Activated B cell treated with CpG ODN at 0.5 μM for 24 hours (primary cell): ENCODE measurements at regions of chr20 and their contacts with region 1.

Region 1: GRCh38 chr20:49338061-49338460 is 60.2 kb upstream of the ZNFX1 start:
- DNase-seq: no peak
- ATAC-seq: no peak
- H3K4me3 Mint-ChIP-seq: no peak overlapping the region
- H3K27ac Mint-ChIP-seq: no peak overlapping the region
- H3K4me1 Mint-ChIP-seq: no peaks in the 10 kb centered on the region
- H3K27me3 Mint-ChIP-seq: peaks cover 16% of the 10 kb centered on the region
- CTCF ChIP-seq: no peak

Region 2: DNA sequence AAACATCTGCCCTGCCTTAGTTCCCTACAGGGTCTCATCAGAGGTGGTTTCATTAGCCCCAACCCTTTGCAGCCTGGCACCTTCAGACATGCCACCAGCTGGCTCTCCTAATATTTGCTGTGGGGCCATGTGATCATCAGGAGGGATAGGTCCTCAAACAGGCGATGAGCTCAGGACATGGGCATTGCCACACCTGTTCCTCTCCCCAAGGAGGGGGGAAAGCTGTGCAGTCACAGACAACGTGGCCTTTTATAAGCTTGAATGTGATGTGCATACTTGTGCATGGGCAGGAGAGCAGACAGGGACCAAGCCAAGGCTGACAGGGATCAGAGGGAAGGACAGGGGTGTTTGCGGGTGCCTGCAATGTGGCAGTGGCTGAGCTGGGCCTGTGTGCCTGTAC is 18.6 kb after region 1 on chr20:
- CTCF ChIA-PET with region 1: no interaction called
- POLR2A ChIA-PET with region 1: no interaction called
- intact Hi-C with region 1: no loop called
- DNase-seq: no peak
- ATAC-seq: no peak
- H3K4me3 Mint-ChIP-seq: no peak overlapping the region
- H3K27ac Mint-ChIP-seq: no peak overlapping the region
- H3K4me1 Mint-ChIP-seq: no peaks in the 10 kb centered on the region
- H3K27me3 Mint-ChIP-seq: peaks cover 8% of the 10 kb centered on the region
- CTCF ChIP-seq: no peak

Region 3: DNA sequence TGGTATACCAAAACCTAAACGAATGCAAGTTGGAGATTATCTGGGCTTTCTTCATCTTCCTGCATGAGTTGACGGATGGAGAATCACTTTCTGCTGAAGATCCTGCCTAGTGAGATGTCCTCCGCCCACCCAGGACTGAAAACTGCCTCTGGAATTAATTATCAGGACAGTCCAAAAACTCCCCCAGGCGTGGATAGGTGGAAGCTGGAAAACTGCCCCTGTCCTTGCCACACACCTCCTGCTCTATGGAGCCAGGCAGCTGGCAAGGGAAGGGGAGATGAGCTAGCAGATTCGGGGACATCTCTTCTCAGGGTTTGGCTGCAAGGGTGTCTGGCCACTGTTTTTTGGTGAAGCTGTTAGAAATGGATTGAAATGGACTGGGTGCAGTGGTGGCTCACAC is 29.1 kb after region 1 on chr20:
- CTCF ChIA-PET with region 1: no interaction called
- POLR2A ChIA-PET with region 1: no interaction called
- intact Hi-C with region 1: no loop called
- DNase-seq: no peak
- ATAC-seq: no peak
- H3K4me3 Mint-ChIP-seq: no peak overlapping the region
- H3K27ac Mint-ChIP-seq: no peak overlapping the region
- H3K4me1 Mint-ChIP-seq: no peaks in the 10 kb centered on the region
- H3K27me3 Mint-ChIP-seq: peaks cover 31% of the 10 kb centered on the region
- CTCF ChIP-seq: no peak

Region 4: DNA sequence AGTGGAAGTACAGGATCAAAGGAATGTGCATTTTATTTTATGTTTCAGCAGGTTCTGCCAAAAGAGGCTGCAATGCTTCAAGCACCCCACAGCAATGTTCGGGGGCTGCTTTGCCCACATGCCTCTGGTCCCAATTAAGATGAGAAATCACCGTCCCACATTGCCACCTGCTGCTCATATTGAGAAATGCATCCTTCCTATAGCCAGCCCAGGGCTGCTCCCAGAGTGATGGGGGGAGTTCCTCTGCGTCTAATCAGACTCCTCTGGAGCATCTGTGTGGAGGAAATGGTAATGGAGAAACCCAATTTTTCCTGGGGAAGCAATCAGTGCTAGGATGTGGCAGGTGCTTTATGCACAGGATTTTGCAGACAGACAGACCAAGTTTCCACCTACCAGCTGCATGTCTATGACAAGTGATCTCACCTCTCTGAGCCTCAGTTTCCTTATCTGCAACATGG is 196.2 kb after region 1 on chr20:
- CTCF ChIA-PET with region 1: interaction called, 3 read pairs
- POLR2A ChIA-PET with region 1: no interaction called
- intact Hi-C with region 1: loop called (anchors 1 kb)
- DNase-seq: no peak
- ATAC-seq: peak; percentile 78
- H3K4me3 Mint-ChIP-seq: no peak overlapping the region
- H3K27ac Mint-ChIP-seq: no peak overlapping the region
- H3K4me1 Mint-ChIP-seq: peaks cover 2% of the 10 kb centered on the region
- H3K27me3 Mint-ChIP-seq: peaks cover 23% of the 10 kb centered on the region
- CTCF ChIP-seq: peak; percentile 60

Region 5: GRCh38 chr20:49888345-49888966 is 550.4 kb after region 1 on chr20:
- CTCF ChIA-PET with region 1: interaction called, 3 read pairs
- POLR2A ChIA-PET with region 1: no interaction called
- intact Hi-C with region 1: loop called (anchors 1 kb)
- DNase-seq: peak; percentile 54
- ATAC-seq: peak; percentile 69
- H3K4me3 Mint-ChIP-seq: no peak overlapping the region
- H3K27ac Mint-ChIP-seq: peak overlapping the region; percentile 46
- H3K4me1 Mint-ChIP-seq: peaks cover 10% of the 10 kb centered on the region
- H3K27me3 Mint-ChIP-seq: no peaks in the 10 kb centered on the region
- CTCF ChIP-seq: no peak

Region 6: GRCh38 chr20:49928401-49929141 is 590.5 kb after region 1 on chr20:
- CTCF ChIA-PET with region 1: no interaction called
- POLR2A ChIA-PET with region 1: no interaction called
- intact Hi-C with region 1: loop called (anchors 1 kb)
- DNase-seq: peak; percentile 48
- ATAC-seq: peak; percentile 85
- H3K4me3 Mint-ChIP-seq: no peak overlapping the region
- H3K27ac Mint-ChIP-seq: no peak overlapping the region
- H3K4me1 Mint-ChIP-seq: peaks cover 4% of the 10 kb centered on the region
- H3K27me3 Mint-ChIP-seq: no peaks in the 10 kb centered on the region
- CTCF ChIP-seq: peak; percentile 59